Mammary epithelial cell (primary cell): ENCODE measurements at regions of chr18 and their contacts with region 1.

Region 1: GRCh38 chr18:57649556-57650500 is 28.2 kb upstream of the NARS1 start:
- DNase-seq: peak; percentile 77
- H3K4me3 ChIP-seq: no peak overlapping the region
- H3K27ac ChIP-seq: no peak overlapping the region
- H3K4me1 ChIP-seq: peaks cover 11% of the 10 kb centered on the region
- H3K27me3 ChIP-seq: no peaks in the 10 kb centered on the region
- CTCF ChIP-seq: no peak

Region 2: DNA sequence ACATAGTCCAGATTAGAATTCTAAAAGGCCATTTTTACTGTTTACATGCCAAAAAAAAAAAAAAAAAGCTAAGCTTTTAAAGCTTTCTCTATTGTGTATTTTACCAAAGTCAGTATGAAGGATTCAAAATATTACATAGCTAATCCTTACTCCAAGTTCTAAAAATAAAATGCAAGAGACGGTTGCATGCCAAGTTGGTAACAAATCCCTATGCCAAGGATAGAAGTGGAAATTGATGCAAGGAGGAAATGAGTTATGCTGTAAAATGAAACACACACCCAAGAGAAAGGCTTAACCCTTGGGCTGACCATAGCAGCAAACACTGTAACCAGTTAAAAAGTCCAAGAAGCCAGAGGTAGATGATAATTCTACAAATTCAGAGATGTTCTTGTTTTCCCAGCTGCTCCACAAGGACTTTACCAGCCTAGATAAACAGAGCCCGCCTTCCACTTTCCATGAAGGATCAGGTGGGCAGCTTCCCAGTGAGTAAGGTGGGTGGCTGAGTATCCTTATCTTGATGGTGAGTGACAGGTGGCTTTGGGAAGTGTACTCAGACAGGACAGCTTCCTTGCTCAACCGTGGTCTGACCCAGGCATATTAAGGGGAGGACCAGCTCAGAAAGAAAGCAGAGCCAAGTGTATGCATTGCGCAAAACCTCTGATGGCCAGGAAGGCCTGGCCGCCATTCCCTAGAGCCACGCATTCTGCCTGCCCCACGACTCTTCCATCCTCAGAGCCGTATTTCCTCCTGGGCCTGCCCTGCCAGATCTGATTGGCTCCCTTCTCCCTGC is 118.9 kb after region 1 on chr18:
- CTCF ChIA-PET with region 1: interaction called, 13 read pairs
- dilution Hi-C with region 1: no loop called
- in situ Hi-C with region 1: no loop called
- intact Hi-C with region 1: no loop called
- DNase-seq: no peak
- H3K4me3 ChIP-seq: no peak overlapping the region
- H3K27ac ChIP-seq: no peak overlapping the region
- H3K4me1 ChIP-seq: peaks cover 20% of the 10 kb centered on the region
- H3K27me3 ChIP-seq: no peaks in the 10 kb centered on the region
- CTCF ChIP-seq: no peak

Region 3: GRCh38 chr18:57859314-57859713 is 209.5 kb after region 1 on chr18:
- CTCF ChIA-PET with region 1: interaction called, 3 read pairs
- dilution Hi-C with region 1: no loop called
- in situ Hi-C with region 1: loop called in 1 of 2 experiments (anchors 10 kb)
- intact Hi-C with region 1: no loop called
- DNase-seq: peak; percentile 40
- H3K4me3 ChIP-seq: no peak overlapping the region
- H3K27ac ChIP-seq: no peak overlapping the region
- H3K4me1 ChIP-seq: no peaks in the 10 kb centered on the region
- H3K27me3 ChIP-seq: no peaks in the 10 kb centered on the region
- CTCF ChIP-seq: peak; percentile 83 to 85